HCT116 (cell line): ENCODE measurements at regions of chr4 and their contacts with region 1.

Region 1: DNA sequence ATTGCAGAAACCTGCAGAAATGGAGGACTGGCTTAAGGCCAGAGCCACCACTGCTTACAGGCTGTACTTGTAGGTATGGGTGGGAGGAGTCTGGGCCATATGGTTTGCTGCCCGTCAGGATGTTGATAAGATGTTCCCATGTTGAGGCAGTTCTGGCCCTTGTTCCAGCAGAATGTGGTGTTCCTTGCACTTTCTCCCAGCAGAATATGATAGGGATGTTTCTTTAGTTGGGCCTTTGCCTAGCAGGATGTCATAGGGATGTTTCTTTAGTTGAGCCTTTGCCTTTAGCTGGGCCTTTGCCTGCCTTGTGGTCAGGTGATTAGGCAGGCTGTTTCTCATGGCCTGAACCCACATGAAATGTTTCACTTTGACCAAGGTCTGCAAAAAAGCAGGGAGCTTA is 139.1 kb upstream of the PAQR3 start:
- DNase-seq: no peak
- ATAC-seq: no peak
- H3K4me3 ChIP-seq: no peak overlapping the region
- H3K27ac ChIP-seq: no peak overlapping the region
- H3K4me1 ChIP-seq: no peaks in the 10 kb centered on the region
- H3K27me3 ChIP-seq: no peaks in the 10 kb centered on the region
- CTCF ChIP-seq: no peak
- POLR2A ChIP-seq: no peak
- RAD21 ChIP-seq: no peak

Region 2: DNA sequence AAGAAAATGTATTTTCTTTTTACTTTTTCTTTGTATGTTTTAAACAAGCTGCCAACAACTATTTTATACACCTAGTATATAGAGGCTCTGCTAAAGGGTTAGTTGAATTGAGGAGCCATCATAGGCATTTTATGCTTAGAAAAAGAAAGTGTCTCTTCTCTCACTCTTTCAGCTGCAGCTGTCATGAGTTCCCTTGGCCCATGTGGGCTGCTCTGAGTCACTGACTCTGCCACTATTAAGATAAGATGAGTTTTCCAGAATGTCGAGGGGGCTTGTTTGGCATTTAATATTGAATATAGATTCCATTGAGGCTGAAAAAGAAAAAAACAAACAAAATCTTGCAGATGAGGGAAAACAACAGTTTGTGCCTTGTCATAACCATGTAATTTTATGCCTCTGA is 13.1 kb before region 1 on chr4:
- CTCF ChIA-PET with region 1: no interaction called
- POLR2A ChIA-PET with region 1: no interaction called
- RAD21 ChIA-PET with region 1: no interaction called
- intact Hi-C with region 1: loop called (anchors 1 kb)
- DNase-seq: no peak
- ATAC-seq: no peak
- H3K4me3 ChIP-seq: no peak overlapping the region
- H3K27ac ChIP-seq: no peak overlapping the region
- H3K4me1 ChIP-seq: no peaks in the 10 kb centered on the region
- H3K27me3 ChIP-seq: peaks cover 24% of the 10 kb centered on the region
- CTCF ChIP-seq: no peak
- POLR2A ChIP-seq: no peak
- RAD21 ChIP-seq: no peak

Region 3: GRCh38 chr4:79535516-79535915 is 457.2 kb after region 1 on chr4:
- CTCF ChIA-PET with region 1: no interaction called
- POLR2A ChIA-PET with region 1: no interaction called
- RAD21 ChIA-PET with region 1: no interaction called
- intact Hi-C with region 1: no loop called
- DNase-seq: no peak
- ATAC-seq: no peak
- H3K4me3 ChIP-seq: no peak overlapping the region
- H3K27ac ChIP-seq: no peak overlapping the region
- H3K4me1 ChIP-seq: no peaks in the 10 kb centered on the region
- H3K27me3 ChIP-seq: peaks cover 12% of the 10 kb centered on the region; the same call in 1 of the 2 replicates
- CTCF ChIP-seq: no peak
- POLR2A ChIP-seq: no peak
- RAD21 ChIP-seq: no peak